ENCODE measurements at regions of chr16 and their contacts with region 1.

Region 1: GRCh38 chr16:5820472-5820871 is 722.9 kb upstream of the EEF2KMT start:
- DNase-seq: no peak
- ATAC-seq: no peak
- H3K4me3 ChIP-seq: no peak overlapping the region
- H3K27ac ChIP-seq: no peak overlapping the region
- H3K4me1 ChIP-seq: no peaks in the 10 kb centered on the region
- H3K27me3 ChIP-seq: no peaks in the 10 kb centered on the region
- CTCF ChIP-seq: no peak
- POLR2A ChIP-seq: no peak

Region 2: DNA sequence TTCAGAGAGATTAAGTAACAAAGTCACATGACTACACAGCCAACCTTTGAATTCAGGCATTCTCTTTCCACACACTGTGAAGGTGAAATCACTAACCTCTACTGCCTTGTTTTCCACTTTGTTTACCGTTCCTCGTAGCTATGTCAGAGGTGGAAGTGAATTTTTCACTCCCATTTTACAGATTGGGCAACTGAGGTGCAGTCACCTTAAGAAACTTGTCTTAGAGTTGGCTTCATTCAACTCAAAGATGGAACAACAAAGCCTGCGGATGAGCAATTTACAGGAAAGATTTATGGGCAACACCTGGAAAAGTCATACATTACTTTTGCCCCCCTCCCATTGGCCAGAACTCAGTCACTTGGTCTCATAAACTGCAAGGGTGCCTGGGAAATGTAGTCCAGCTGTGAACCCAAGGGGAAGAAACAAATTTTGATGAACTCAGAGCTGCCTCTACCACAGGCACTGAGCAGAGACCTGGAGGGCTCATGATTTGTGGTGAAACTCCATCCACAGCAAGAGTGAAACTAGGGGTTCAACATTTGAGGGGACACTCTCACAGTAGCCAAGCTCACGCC is 61.7 kb after region 1 on chr16:
- in situ Hi-C with region 1: loop called in 1 of 4 experiments (anchors 10 kb)
- intact Hi-C with region 1: no loop called
- DNase-seq: no peak
- ATAC-seq: no peak
- H3K4me3 ChIP-seq: no peak overlapping the region
- H3K27ac ChIP-seq: no peak overlapping the region
- H3K4me1 ChIP-seq: no peaks in the 10 kb centered on the region
- H3K27me3 ChIP-seq: no peaks in the 10 kb centered on the region
- CTCF ChIP-seq: no peak
- POLR2A ChIP-seq: no peak

Measured in gastrocnemius medialis (tissue), 4 donors.